ENCODE measurements at regions of chr15 and their contacts with region 1.

Region 1: GRCh38 chr15:74906446-74907162 is at the start of gene FAM219B:
- DNase-seq: peak; percentile 90
- ATAC-seq: peak; percentile 93
- H3K4me3 Mint-ChIP-seq: peak within 1 kb of the TSS; percentile 93
- H3K27ac Mint-ChIP-seq: peak within 1 kb of the TSS; percentile 95
- H3K4me1 Mint-ChIP-seq: peaks cover 34% of the 10 kb centered on the region
- H3K27me3 Mint-ChIP-seq: no peaks in the 10 kb centered on the region
- total RNA-seq, gene FAM219B: 95.2 to 119 TPM

Region 2: DNA sequence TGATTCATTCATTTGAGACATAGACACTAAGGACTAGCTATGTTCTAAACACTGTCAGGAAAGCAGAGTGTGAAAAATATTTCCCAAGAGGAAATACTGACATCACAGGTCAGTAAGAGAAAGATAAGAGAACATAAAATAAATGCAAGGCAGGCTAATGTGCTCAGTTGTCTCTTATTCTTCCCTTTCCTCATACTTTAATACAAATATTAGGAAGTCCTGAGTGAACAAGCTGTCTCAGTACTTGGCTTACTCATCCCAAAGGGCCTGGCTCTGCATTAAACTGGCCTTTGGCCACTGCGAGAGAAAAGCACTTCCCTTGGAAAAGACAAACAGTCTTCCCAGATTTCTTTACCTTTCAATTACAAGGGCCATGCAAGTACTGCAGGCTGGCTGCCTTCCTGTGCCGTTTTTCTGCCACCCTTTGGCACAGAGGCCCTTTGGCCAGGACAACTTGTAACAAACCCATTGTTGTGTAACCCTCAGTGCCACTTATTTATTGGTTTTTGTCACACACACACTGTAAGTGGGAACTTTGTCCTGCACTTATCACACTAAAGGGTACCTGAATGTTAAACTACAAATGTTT is 242.5 kb before region 1 on chr15:
- CTCF ChIA-PET with region 1: no interaction called
- DNase-seq: no peak
- ATAC-seq: no peak
- H3K4me3 Mint-ChIP-seq: no peak overlapping the region
- H3K27ac Mint-ChIP-seq: no peak overlapping the region
- H3K4me1 Mint-ChIP-seq: no peaks in the 10 kb centered on the region
- H3K27me3 Mint-ChIP-seq: no peaks in the 10 kb centered on the region

Region 3: GRCh38 chr15:74781431-74782258 is 125.0 kb before region 1 on chr15 and contains the start of gene CSK:
- CTCF ChIA-PET with region 1: interaction called, 18 read pairs
- DNase-seq: peak; percentile 84
- ATAC-seq: peak; percentile 62
- H3K4me3 Mint-ChIP-seq: peak within 1 kb of the TSS; percentile 87
- H3K27ac Mint-ChIP-seq: peak within 1 kb of the TSS; percentile 98
- H3K4me1 Mint-ChIP-seq: peaks cover 64% of the 10 kb centered on the region
- H3K27me3 Mint-ChIP-seq: no peaks in the 10 kb centered on the region
- total RNA-seq, gene CSK: 349 to 369 TPM

Region 4: DNA sequence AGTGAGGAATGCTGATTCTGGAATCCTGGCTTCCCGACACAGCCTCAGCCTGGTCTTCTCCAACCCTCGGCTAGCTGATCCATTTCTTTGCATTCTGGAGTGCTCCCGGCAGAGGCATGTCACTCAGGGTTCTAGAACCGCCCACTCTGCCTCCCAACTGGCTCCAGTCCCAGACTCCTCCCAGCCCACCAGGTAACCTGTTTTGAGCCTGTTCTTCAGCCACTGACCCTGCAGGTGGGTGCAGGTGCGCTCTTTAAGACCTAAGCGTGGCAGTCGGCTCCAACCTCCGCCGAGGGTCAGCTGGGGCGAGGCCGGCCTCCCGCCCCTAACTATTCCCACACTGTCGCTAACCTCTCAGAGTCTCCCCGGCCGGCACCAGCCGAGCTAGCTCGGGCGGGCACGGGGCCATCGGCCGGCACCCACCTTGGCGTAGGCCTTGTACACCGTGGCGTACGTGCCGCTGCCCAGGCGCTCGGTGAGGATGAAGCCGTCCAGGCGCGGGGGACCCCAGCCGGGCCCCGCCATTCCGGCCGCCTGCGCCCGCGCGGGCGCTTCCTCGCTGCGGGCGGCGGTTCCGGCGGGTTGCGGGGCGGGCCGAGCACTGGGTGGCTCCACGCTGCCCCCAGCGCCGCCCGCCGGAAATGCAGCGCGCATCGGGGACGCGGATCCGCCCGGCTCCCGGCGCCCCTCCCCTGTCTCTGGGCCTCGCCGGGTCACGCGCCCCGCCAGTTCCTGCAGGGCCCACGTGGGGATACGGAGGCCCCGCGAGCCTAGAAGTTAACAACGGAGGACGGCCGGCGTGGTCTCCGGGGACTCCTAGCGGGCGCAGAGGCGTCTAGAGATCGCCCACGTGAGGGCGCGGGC is 63.8 kb before region 1 on chr15 and contains the start of gene ULK3:
- CTCF ChIA-PET with region 1: interaction called, 19 read pairs
- DNase-seq: peak; percentile 95
- ATAC-seq: peak; percentile 87
- H3K4me3 Mint-ChIP-seq: peak within 1 kb of the TSS; percentile 87
- H3K27ac Mint-ChIP-seq: peak within 1 kb of the TSS; percentile 93
- H3K4me1 Mint-ChIP-seq: peaks cover 47% of the 10 kb centered on the region
- H3K27me3 Mint-ChIP-seq: no peaks in the 10 kb centered on the region
- total RNA-seq, gene ULK3: 48.5 to 58.6 TPM

Region 5: DNA sequence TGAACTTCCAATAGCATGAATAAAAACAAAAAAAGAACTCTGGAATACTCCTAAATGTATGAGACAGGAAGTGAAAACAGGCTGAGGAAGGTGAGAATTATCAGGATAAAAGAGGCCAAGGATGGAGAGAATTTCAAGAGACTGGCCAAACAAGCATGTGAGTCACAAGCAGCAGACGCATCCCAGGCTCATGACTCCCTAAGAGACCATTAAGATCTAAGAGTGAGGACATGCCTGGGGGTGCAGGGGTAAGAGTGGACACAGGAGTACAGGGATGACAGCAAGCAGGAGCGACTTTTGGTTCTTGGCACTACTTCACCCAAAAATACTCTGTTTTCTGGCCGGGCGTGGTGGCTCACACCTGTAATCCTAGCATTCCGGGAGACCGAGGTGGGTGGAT is 40.5 kb before region 1 on chr15:
- CTCF ChIA-PET with region 1: interaction called, 67 read pairs
- DNase-seq: no peak
- ATAC-seq: no peak
- H3K4me3 Mint-ChIP-seq: no peak overlapping the region
- H3K27ac Mint-ChIP-seq: peak overlapping the region; percentile 47
- H3K4me1 Mint-ChIP-seq: peaks cover 77% of the 10 kb centered on the region
- H3K27me3 Mint-ChIP-seq: no peaks in the 10 kb centered on the region

Region 6: GRCh38 chr15:74884428-74885223 is 22.0 kb before region 1 on chr15:
- CTCF ChIA-PET with region 1: interaction called, 43 read pairs
- DNase-seq: no peak
- ATAC-seq: no peak
- H3K4me3 Mint-ChIP-seq: no peak overlapping the region
- H3K27ac Mint-ChIP-seq: no peak overlapping the region
- H3K4me1 Mint-ChIP-seq: peaks cover 22% of the 10 kb centered on the region
- H3K27me3 Mint-ChIP-seq: no peaks in the 10 kb centered on the region

Region 7: DNA sequence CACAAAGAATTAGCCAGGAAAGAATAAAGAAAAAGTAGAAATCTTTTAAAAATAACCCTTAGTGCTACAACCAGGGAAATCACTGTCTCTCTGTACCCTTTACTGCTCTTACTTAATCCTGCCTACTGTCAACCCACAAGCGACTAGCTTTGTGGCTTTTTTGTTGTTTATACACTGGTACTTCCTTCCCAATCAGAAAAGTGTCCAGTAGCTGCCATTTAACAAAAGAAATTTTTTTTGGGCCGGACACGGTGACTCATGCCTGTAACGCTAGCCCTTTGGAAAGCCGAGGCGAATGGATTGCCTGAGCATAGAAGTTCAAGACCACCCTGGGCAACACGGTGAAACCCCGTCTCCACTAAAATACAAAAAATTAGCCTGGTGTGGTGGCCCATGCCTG is 13.9 kb after region 1 on chr15:
- CTCF ChIA-PET with region 1: interaction called, 15 read pairs
- DNase-seq: no peak
- ATAC-seq: no peak
- H3K4me3 Mint-ChIP-seq: no peak overlapping the region
- H3K27ac Mint-ChIP-seq: no peak overlapping the region
- H3K4me1 Mint-ChIP-seq: peaks cover 16% of the 10 kb centered on the region
- H3K27me3 Mint-ChIP-seq: no peaks in the 10 kb centered on the region

Region 8: GRCh38 chr15:74950078-74951000 is 43.7 kb after region 1 on chr15:
- CTCF ChIA-PET with region 1: interaction called, 17 read pairs
- DNase-seq: peak; percentile 86
- ATAC-seq: peak; percentile 80
- H3K4me3 Mint-ChIP-seq: no peak overlapping the region
- H3K27ac Mint-ChIP-seq: no peak overlapping the region
- H3K4me1 Mint-ChIP-seq: peaks cover 9% of the 10 kb centered on the region
- H3K27me3 Mint-ChIP-seq: no peaks in the 10 kb centered on the region